Activated CD4-positive, alpha-beta memory T cell treated with anti-CD3 and anti-CD28 coated beads for 36 hours (primary cell): ENCODE measurements at regions of chr10 and their contacts with region 1.

Region 1: DNA sequence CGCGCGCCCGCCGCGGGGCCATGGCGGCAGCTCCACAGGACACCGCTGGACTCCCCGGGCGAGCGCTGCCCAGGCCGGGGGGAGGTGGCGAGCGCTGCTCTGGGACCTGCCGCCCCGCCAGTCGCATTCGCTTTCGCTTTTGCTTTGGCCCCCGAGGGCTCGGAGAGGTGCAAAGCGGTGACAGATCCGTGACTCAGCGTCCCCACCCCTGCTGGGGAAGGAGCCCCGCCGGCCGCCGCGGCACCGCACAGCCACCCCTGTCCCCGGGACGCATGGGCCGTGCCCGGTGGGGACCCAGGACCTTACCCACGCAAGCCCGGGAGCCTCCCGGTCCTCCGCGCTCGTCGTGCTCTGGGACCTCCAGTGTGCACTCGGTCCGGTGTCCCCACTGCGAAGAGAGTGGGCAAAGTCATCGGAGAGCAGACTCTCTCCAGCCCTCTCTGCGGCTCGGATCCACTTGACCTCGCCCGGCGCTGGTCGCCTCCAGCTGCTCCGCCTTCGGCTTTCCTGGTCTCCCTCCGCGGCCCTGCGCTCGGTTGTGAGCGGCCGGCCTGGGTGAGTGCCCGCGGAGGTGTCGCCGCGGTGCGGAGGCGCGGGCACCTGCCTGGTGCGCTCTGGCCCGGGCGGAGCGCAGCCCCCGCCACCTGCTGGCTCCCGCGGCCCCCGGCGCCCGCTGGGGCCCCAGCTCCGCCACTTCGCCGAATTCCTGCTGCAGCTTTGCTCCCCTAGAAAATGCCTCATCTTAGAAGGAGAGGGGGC is at the start of gene IL15RA:
- DNase-seq: peak; percentile 93
- H3K4me3 Mint-ChIP-seq: peak within 1 kb of the TSS; percentile 91
- H3K27ac Mint-ChIP-seq: peak within 1 kb of the TSS; percentile 93
- H3K4me1 Mint-ChIP-seq: peaks cover 30% of the 10 kb centered on the region
- H3K27me3 Mint-ChIP-seq: no peaks in the 10 kb centered on the region
- total RNA-seq, gene IL15RA: 20.1 to 20.2 TPM

Region 2: GRCh38 chr10:5293691-5294550 is 683.7 kb before region 1 on chr10:
- CTCF ChIA-PET with region 1: no interaction called
- POLR2A ChIA-PET with region 1: no interaction called
- intact Hi-C with region 1: loop called (anchors 10 kb)
- DNase-seq: peak; percentile 91
- H3K4me3 Mint-ChIP-seq: peak overlapping the region; percentile 86
- H3K27ac Mint-ChIP-seq: peak overlapping the region; percentile 95
- H3K4me1 Mint-ChIP-seq: peaks cover 79% of the 10 kb centered on the region
- H3K27me3 Mint-ChIP-seq: no peaks in the 10 kb centered on the region

Region 3: DNA sequence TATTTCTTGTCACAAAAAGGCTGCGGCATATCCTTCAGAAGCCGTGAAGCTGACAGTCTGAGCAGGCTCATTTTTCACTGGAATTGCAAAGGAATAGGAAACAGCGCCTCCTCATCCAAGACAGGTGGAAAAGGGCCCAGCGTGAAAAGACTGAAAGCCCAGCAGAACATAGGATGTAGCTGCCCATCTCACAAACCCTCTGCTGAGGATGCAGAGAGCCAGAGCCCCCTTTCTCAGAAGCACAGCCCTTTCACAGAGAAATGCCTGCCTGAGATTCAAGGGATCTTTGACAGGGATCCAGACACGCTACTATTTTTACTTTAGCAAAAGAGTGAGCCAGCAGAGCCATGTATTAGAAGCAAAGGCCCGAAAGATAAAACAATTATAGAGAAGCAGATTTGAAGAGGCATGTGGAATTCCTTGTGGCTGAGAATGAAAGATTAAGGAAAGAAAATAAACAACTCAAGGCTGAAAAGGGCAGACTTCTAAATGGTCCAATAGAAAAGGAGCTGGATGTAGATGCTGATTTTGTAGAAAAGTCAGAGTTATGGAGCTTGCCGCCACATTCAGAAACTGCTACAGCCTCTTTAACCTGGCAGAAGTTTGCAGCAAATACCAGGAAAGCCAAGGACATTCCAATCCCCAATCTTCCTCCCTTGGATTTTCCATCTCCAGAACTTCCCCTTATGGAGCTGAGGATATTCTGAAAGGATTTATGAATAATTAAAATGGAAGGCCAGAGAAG is 201.3 kb before region 1 on chr10:
- CTCF ChIA-PET with region 1: no interaction called
- POLR2A ChIA-PET with region 1: no interaction called
- intact Hi-C with region 1: no loop called
- DNase-seq: no peak
- H3K4me3 Mint-ChIP-seq: no peak overlapping the region
- H3K27ac Mint-ChIP-seq: peak overlapping the region; percentile 85
- H3K4me1 Mint-ChIP-seq: peaks cover 56% of the 10 kb centered on the region
- H3K27me3 Mint-ChIP-seq: no peaks in the 10 kb centered on the region

Region 4: DNA sequence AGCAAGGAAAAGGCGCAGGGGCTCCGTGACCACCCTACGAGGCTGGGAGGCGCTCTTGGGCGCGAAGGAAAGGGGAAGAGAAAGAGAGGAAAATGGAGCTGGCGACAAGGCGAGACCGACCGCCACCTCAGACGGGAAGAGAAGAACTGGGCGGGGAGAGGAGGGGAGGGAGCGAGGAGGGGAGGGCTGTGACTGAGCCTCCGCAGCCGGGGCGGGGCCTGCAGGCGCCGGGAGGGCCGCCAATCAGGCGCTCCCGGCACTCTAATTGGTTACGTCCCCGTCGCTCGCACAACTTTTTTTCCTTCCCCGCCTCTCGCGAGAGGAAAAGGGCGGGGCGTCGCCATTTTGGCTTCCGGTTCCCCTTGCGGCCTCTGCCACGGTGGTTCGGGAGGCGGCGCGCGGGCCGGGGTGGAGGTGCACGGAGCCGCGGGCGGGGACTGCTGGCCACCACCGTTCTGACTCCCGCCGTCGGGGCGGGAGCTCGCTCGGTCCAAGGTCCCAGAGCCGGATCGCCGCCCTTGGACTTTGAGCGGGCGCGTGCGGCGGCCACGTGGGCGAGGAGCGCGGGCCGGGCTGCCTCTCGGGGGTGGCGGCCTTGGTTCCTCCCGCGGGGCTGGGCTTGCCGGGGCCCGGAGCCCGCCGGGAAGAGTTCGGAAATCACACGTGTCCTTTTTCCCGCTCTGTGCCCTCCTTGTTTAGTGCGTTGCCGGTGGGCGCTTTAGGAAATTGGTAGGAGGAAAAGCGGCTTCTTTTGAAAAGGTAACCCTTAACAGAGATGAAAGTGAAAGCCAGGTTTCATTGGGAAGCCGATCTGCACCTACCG is 164.2 kb before region 1 on chr10 and contains the start of gene GDI2:
- CTCF ChIA-PET with region 1: no interaction called
- POLR2A ChIA-PET with region 1: interaction called, 4 read pairs
- intact Hi-C with region 1: loop called (anchors 2 kb)
- DNase-seq: peak; percentile 98
- H3K4me3 Mint-ChIP-seq: peak within 1 kb of the TSS; percentile 82
- H3K27ac Mint-ChIP-seq: peak within 1 kb of the TSS; percentile 95
- H3K4me1 Mint-ChIP-seq: peaks cover 60% of the 10 kb centered on the region
- H3K27me3 Mint-ChIP-seq: no peaks in the 10 kb centered on the region
- total RNA-seq, gene GDI2: 283 to 286 TPM

Region 5: DNA sequence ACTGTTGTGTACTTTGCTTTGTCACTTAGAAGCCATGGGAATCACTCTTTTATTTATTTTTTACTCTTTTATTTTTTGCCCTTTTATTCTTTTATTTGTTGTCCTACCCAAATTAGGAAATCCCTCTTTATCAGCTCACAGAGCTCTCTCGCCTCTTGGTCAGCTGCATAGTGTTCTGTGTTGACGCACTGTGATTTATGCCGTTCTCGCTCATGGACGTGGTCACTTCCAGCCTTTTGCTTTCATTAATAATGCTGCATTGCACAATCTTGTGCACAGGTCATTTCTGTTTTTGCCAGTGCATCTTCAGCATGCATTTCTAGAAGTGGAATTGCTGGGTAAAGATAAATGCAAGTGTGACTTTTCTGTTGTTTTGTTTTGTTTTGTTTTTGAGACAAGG is 45.3 kb before region 1 on chr10:
- CTCF ChIA-PET with region 1: no interaction called
- POLR2A ChIA-PET with region 1: no interaction called
- intact Hi-C with region 1: no loop called
- DNase-seq: no peak
- H3K4me3 Mint-ChIP-seq: no peak overlapping the region
- H3K27ac Mint-ChIP-seq: no peak overlapping the region
- H3K4me1 Mint-ChIP-seq: no peaks in the 10 kb centered on the region
- H3K27me3 Mint-ChIP-seq: no peaks in the 10 kb centered on the region

Region 6: DNA sequence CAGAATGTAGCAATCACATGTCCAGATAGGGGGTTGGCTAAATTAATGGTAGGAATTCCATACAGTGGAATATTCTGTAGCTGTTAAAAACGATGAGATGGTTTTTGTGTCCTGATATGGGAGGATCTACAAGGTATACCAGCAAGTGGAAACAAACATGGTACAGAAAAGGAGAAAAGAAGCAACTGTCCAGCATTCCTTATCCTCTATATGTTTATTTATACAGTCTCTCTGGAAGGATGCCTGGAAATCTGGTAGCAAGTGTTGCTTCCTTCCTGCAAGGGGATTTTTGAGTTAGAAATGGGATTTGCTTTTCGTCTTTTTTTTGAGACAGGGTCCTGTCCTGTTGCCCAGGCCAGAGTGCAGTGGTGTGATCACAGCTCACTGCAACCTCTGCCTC is 19.6 kb before region 1 on chr10:
- CTCF ChIA-PET with region 1: no interaction called
- POLR2A ChIA-PET with region 1: no interaction called
- intact Hi-C with region 1: no loop called
- DNase-seq: no peak
- H3K4me3 Mint-ChIP-seq: no peak overlapping the region
- H3K27ac Mint-ChIP-seq: no peak overlapping the region
- H3K4me1 Mint-ChIP-seq: no peaks in the 10 kb centered on the region
- H3K27me3 Mint-ChIP-seq: no peaks in the 10 kb centered on the region

Region 7: DNA sequence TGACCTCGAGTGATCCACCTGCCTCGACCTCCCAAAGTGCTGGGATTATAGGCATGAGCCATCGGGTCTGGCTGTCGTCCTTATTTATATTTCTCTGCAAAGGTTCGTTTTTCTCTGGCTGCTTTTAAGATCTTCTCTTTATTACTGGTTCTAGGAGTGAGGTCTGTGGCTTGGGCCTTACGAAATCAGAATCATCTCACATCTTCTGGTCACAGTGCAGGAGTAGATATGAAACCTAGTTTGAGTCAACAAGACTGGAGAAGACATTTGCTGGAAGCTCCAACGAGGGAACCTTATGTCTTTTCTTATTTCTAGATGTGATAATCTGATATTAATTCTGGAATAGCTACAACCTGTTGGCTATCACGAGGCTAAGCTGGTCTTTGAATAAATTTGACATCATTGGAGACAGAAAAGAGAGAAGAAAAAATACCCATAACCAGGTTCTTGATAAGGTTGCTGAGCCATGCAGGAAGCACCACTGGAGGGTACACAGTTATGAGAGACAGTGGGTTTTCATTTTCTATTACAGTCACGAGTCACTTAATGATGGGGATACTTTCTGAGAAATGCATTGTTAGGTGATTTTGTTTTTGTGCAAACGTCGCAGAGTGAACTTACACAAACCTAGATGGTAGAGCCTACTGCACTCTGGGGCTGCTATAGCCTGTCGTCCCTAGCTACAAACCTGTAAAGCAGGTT is 25.3 kb after region 1 on chr10:
- CTCF ChIA-PET with region 1: no interaction called
- POLR2A ChIA-PET with region 1: interaction called, 3 read pairs
- intact Hi-C with region 1: loop called (anchors 1 kb)
- DNase-seq: peak; percentile 51
- H3K4me3 Mint-ChIP-seq: no peak overlapping the region
- H3K27ac Mint-ChIP-seq: peak overlapping the region; percentile 56
- H3K4me1 Mint-ChIP-seq: peaks cover 30% of the 10 kb centered on the region
- H3K27me3 Mint-ChIP-seq: peaks cover 10% of the 10 kb centered on the region

Region 8: GRCh38 chr10:6068422-6068821 is 90.8 kb after region 1 on chr10:
- CTCF ChIA-PET with region 1: no interaction called
- POLR2A ChIA-PET with region 1: no interaction called
- intact Hi-C with region 1: loop called (anchors 5 kb)
- DNase-seq: peak; percentile 66
- H3K4me3 Mint-ChIP-seq: peak overlapping the region; percentile 71
- H3K27ac Mint-ChIP-seq: peak overlapping the region; percentile 96
- H3K4me1 Mint-ChIP-seq: peaks cover 92% of the 10 kb centered on the region
- H3K27me3 Mint-ChIP-seq: peaks cover 2% of the 10 kb centered on the region

Region 9: GRCh38 chr10:6144406-6145165 is 166.9 kb after region 1 on chr10:
- CTCF ChIA-PET with region 1: no interaction called
- POLR2A ChIA-PET with region 1: no interaction called
- intact Hi-C with region 1: loop called (anchors 5 kb)
- DNase-seq: peak; percentile 93
- H3K4me3 Mint-ChIP-seq: peak overlapping the region; percentile 80
- H3K27ac Mint-ChIP-seq: peak overlapping the region; percentile 83
- H3K4me1 Mint-ChIP-seq: peaks cover 84% of the 10 kb centered on the region
- H3K27me3 Mint-ChIP-seq: peaks cover 1% of the 10 kb centered on the region